ENCODE measurements at regions of chr22 and their contacts with region 1.

Region 1: GRCh38 chr22:46762238-46763050 is at the start of gene TBC1D22A:
- DNase-seq: peak; percentile 96
- H3K4me3 ChIP-seq: peak within 1 kb of the TSS; percentile 93
- H3K27ac ChIP-seq: peak within 1 kb of the TSS; percentile 70
- H3K4me1 ChIP-seq: peaks cover 43% of the 10 kb centered on the region
- CTCF ChIP-seq: no peak
- total RNA-seq, gene TBC1D22A: 15.0 and 22.3 TPM in 2 replicates

Region 2: DNA sequence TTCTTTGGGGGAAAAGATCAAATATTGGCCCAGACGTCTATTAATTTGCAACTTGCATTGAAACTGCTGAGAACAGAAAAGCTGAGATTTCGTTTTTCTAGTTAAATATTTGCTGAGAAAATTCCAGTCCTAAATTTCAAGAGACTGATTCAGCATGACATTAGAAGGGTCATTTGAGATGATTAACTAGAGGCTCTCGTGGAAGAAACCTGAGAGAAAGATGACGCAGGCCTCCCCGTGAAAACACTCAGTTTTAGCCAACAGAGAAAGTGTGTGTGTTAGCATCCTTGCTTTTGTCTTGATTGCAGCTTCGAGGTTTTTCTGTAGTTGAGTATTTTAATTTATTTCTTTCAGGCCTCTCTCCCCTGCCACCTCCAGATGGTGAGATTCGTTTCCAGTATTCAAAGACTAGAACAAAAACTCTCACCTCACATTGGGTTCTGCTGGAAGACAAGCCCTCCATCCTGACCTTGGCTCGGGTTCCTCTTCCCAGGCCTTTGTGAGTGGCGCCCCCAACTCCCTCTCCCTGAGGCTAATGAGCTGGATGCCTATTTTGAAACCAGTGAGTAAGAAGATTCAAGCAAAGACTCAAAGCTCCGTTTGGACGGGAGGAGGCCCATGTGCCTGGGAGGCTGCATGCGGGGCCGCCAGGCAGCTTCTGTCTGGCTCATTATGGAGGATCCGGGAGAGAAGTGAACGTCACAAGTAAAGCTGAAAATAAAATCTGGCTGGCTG is 277.4 kb before region 1 on chr22:
- CTCF ChIA-PET with region 1: no interaction called
- POLR2A ChIA-PET with region 1: interaction called, 12 read pairs
- intact Hi-C with region 1: no loop called
- DNase-seq: no peak
- H3K4me3 ChIP-seq: no peak overlapping the region
- H3K27ac ChIP-seq: no peak overlapping the region
- H3K4me1 ChIP-seq: no peaks in the 10 kb centered on the region
- CTCF ChIP-seq: no peak

Region 3: GRCh38 chr22:46798366-46799350 is 36.2 kb after region 1 on chr22:
- CTCF ChIA-PET with region 1: interaction called, 4 read pairs
- POLR2A ChIA-PET with region 1: interaction called, 5 read pairs
- intact Hi-C with region 1: loop called (anchors 2 kb)
- DNase-seq: peak; percentile 78
- H3K4me3 ChIP-seq: no peak overlapping the region
- H3K27ac ChIP-seq: no peak overlapping the region
- H3K4me1 ChIP-seq: peaks cover 7% of the 10 kb centered on the region
- CTCF ChIP-seq: peak; percentile 94